ENCODE measurements at regions of chr7 and their contacts with region 1.

Region 1: DNA sequence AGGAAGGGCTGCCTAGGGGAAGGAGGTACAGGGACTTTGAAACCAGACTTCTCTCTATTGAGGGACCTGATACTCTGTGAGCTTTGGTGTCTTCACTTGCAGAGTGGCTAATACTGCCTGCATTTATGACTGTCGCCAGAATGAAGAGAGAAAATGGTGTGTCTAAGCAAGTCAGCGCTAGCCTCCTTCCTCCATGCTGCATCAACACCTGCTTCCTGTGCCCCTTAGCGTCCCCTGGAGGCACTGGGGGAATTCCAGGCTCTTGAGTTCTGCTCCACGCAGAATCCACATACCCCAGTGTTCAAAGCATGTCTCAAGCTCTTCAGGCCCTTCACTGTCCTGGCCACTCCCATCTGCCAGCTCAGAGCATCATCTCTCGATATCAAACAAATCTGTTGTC is 140.5 kb downstream of the PKD1L1 start:
- DNase-seq: no peak

Region 2: DNA sequence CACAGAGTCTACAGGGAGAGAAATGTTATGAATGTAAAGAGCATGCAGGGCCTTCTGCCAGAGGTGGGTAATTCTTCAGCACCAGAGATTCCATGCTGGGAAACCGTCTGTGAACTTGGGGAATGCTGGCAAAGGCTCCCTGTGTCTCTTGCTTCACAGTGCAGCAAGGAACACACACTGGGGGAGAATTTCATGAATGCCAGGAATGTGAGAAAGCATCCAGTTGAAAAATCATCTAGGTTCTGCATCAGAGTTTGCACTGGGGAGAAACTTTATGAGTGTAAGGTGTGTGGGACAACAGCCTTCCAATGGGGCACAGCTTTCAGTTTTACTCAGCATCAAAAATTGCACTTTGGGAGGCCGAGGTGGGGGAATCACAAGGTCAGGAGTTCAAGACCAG is 1662.3 kb before region 1 on chr7:
- intact Hi-C with region 1: no loop called
- DNase-seq: peak; percentile 71

Region 3: GRCh38 chr7:47202146-47202783 is 605.5 kb before region 1 on chr7:
- intact Hi-C with region 1: loop called in 1 of 2 experiments (anchors 10 kb)
- DNase-seq: no peak